ENCODE measurements at regions of chr21 and their contacts with region 1.

Region 1: DNA sequence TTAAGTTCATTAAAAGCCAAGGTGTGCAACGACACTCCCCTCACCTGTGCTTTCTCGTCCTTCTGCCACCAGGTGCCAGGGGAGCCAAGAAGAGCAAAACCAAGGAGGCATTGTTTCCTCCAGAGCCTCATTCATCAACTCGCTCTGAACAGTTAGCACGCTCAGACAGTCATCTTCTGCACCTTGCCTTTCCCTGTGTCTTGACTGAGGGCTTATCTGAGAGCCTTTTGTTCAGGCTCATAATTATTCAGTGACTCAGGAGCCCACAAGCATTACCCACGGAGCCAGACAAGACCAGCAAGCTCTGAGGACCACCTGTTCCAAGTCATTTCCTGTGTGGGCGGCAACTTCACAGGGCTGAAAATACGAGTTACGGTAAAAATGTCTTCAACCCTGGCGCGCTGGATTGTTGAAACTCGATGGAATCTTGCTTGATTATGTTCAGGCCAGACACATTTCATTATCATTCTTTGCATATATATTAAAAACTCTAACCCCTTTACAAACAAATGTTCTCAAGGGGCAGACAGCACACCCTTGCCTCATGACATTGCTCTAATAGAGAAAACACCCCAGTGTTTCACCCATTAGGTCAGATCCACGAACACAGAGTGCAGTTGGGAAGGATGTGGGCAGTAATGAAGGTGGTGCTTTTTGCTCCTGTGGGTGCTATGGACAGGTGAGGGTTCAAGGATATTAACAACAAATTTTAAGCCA is 89.7 kb upstream of the RUNX1 start:
- DNase-seq: peak; percentile 100
- H3K4me3 ChIP-seq: no peak overlapping the region
- H3K27ac ChIP-seq: peak overlapping the region; percentile 99
- H3K4me1 ChIP-seq: peaks cover 45% of the 10 kb centered on the region
- H3K27me3 ChIP-seq: no peaks in the 10 kb centered on the region
- CTCF ChIP-seq: peak; percentile 26 to 51

Region 2: GRCh38 chr21:35048706-35049617 is 89.9 kb before region 1 on chr21 and contains the start of gene RUNX1:
- CTCF ChIA-PET with region 1: no interaction called
- dilution Hi-C with region 1: no loop called
- in situ Hi-C with region 1: no loop called
- intact Hi-C with region 1: loop called (anchors 2 kb)
- DNase-seq: peak; percentile 91
- H3K4me3 ChIP-seq: peak within 1 kb of the TSS; percentile 13 to 35 (median 34)
- H3K27ac ChIP-seq: peak within 1 kb of the TSS; percentile 90
- H3K4me1 ChIP-seq: peaks cover 32% of the 10 kb centered on the region
- H3K27me3 ChIP-seq: no peaks in the 10 kb centered on the region
- CTCF ChIP-seq: no peak
- total RNA-seq, gene RUNX1: 126 to 133 TPM

Region 3: DNA sequence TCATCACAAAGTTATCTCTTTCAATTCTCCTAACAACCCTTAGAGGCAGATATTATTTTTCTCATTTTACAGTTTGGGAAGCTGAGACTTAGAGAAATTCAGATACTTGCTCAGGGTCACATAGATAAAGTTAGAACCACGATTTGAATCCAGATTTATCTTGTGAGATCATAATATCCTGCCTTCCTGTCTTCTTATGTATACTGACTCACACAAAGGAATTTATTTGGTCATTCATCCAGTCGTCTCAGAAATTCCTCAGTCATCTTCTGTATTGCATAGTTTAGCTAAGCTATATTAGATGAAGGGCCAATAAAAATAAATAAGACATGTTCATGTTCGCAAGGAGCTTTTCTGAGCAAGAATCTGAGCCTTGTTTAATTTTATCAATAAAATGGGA is 54.0 kb before region 1 on chr21:
- CTCF ChIA-PET with region 1: no interaction called
- dilution Hi-C with region 1: no loop called
- in situ Hi-C with region 1: no loop called
- intact Hi-C with region 1: loop called (anchors 2 kb)
- DNase-seq: peak; percentile 76
- H3K4me3 ChIP-seq: no peak overlapping the region
- H3K27ac ChIP-seq: peak overlapping the region; percentile 81
- H3K4me1 ChIP-seq: peaks cover 34% of the 10 kb centered on the region
- H3K27me3 ChIP-seq: no peaks in the 10 kb centered on the region
- CTCF ChIP-seq: no peak

Region 4: GRCh38 chr21:35179990-35180540 is 41.2 kb after region 1 on chr21:
- CTCF ChIA-PET with region 1: no interaction called
- dilution Hi-C with region 1: no loop called
- in situ Hi-C with region 1: no loop called
- intact Hi-C with region 1: loop called (anchors 1 kb)
- DNase-seq: peak; percentile 87
- H3K4me3 ChIP-seq: no peak overlapping the region
- H3K27ac ChIP-seq: peak overlapping the region; percentile 92
- H3K4me1 ChIP-seq: peaks cover 28% of the 10 kb centered on the region
- H3K27me3 ChIP-seq: no peaks in the 10 kb centered on the region
- CTCF ChIP-seq: no peak

Region 5: DNA sequence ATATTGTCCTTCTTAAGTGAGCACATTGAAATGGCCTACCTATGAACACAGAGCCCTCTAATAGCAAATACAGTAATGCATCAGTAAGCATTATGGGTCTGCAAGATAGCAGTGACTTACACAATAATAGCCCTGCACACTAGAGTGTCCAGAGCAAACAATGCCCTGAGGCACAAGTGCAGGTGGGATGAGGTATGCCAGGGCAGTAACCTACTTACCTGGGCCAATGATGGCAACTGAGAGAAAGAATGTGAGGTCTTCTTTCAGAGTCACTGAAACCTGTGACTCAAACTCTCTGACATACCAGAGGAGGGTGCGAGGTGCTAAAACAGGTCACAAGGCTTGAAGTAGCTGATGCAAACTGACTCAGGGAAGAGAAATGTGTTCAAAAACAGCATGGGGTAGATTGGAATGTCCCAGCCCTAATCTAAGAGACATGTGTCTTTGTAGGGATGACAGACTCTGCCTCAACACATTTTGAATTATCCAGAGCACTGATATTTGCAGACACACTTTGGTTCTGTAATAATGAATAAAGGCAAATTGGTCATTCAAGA is 78.8 kb after region 1 on chr21:
- CTCF ChIA-PET with region 1: interaction called, 3 read pairs
- dilution Hi-C with region 1: no loop called
- in situ Hi-C with region 1: no loop called
- intact Hi-C with region 1: loop called (anchors 1 kb)
- DNase-seq: peak; percentile 100
- H3K4me3 ChIP-seq: no peak overlapping the region
- H3K27ac ChIP-seq: peak overlapping the region; percentile 98
- H3K4me1 ChIP-seq: peaks cover 28% of the 10 kb centered on the region
- H3K27me3 ChIP-seq: no peaks in the 10 kb centered on the region
- CTCF ChIP-seq: no peak

Region 6: GRCh38 chr21:35303085-35303484 is 164.3 kb after region 1 on chr21:
- CTCF ChIA-PET with region 1: no interaction called
- dilution Hi-C with region 1: no loop called
- in situ Hi-C with region 1: no loop called
- intact Hi-C with region 1: loop called (anchors 5 kb)
- DNase-seq: peak; percentile 95
- H3K4me3 ChIP-seq: no peak overlapping the region
- H3K27ac ChIP-seq: peak overlapping the region; percentile 25
- H3K4me1 ChIP-seq: peaks cover 13% of the 10 kb centered on the region
- H3K27me3 ChIP-seq: no peaks in the 10 kb centered on the region
- CTCF ChIP-seq: no peak

Region 7: GRCh38 chr21:35384375-35384774 is 245.6 kb after region 1 on chr21:
- CTCF ChIA-PET with region 1: no interaction called
- dilution Hi-C with region 1: no loop called
- in situ Hi-C with region 1: no loop called
- intact Hi-C with region 1: no loop called
- DNase-seq: no peak
- H3K4me3 ChIP-seq: no peak overlapping the region
- H3K27ac ChIP-seq: no peak overlapping the region
- H3K4me1 ChIP-seq: peaks cover 10% of the 10 kb centered on the region
- H3K27me3 ChIP-seq: no peaks in the 10 kb centered on the region
- CTCF ChIP-seq: no peak

Region 8: GRCh38 chr21:35940074-35940927 is 801.5 kb after region 1 on chr21:
- CTCF ChIA-PET with region 1: no interaction called
- dilution Hi-C with region 1: no loop called
- in situ Hi-C with region 1: no loop called
- intact Hi-C with region 1: loop called (anchors 5 kb)
- DNase-seq: peak; percentile 66
- H3K4me3 ChIP-seq: no peak overlapping the region
- H3K27ac ChIP-seq: no peak overlapping the region
- H3K4me1 ChIP-seq: no peaks in the 10 kb centered on the region
- H3K27me3 ChIP-seq: no peaks in the 10 kb centered on the region
- CTCF ChIP-seq: peak; percentile 77

Measured in mammary epithelial cell (primary cell).